Ascending aorta (tissue), 2 donors: ENCODE measurements at regions of chr1 and their contacts with region 1.

Region 1: DNA sequence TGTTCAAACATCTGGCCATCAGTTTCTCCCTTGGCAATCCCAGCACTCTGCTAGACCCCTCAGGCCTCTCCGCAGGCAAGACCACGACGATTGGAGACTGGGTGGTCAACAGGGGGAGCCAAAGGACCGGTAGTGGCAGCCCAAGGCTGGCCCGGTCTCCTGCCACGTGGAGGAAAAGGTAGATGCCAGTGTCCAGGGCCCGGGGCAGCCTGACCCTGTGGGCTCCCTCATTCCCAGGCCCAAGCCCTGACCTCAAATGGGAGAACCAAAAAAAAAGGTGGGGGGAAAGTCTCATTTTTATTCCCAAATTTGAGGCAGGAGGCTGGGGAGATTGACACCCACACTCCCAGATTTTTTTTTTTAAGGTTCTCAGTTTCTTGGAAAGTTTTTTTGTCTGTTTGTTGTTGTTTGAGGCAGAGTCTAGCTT is 24.8 kb downstream of the S100A6 start:
- DNase-seq: peak in 1 of 2 donors; percentile 93
- H3K4me3 ChIP-seq: no peak overlapping the region
- H3K27ac ChIP-seq: no peak overlapping the region
- H3K4me1 ChIP-seq: peaks cover 11 to 24% of the 10 kb centered on the region in 2 donors
- H3K27me3 ChIP-seq: no peaks in the 10 kb centered on the region
- CTCF ChIP-seq: peak; percentile 93 to 95 (median 93)

Region 2: GRCh38 chr1:153494976-153495535 is 15.9 kb before region 1 on chr1:
- intact Hi-C with region 1: loop called (anchors 2 kb)
- DNase-seq: peak in 1 of 2 donors; percentile 90
- H3K4me3 ChIP-seq: no peak overlapping the region
- H3K27ac ChIP-seq: peak overlapping the region; percentile 55 to 58
- H3K4me1 ChIP-seq: peaks cover 17 to 37% of the 10 kb centered on the region in 2 donors
- H3K27me3 ChIP-seq: no peaks in the 10 kb centered on the region
- CTCF ChIP-seq: peak; percentile 90 to 93 (median 92)

Region 3: GRCh38 chr1:153532769-153533599 is 22.0 kb after region 1 on chr1:
- intact Hi-C with region 1: loop called (anchors 2 kb)
- DNase-seq: peak; percentile 65 to 95
- H3K4me3 ChIP-seq: peak overlapping the region; percentile 70 to 95
- H3K27ac ChIP-seq: peak overlapping the region; percentile 98 to 100
- H3K4me1 ChIP-seq: peaks cover 5 to 27% of the 10 kb centered on the region in 2 donors
- H3K27me3 ChIP-seq: no peaks in the 10 kb centered on the region
- CTCF ChIP-seq: peak; percentile 94 to 96 (median 96)

Region 4: GRCh38 chr1:153617675-153618074 is 106.7 kb after region 1 on chr1:
- intact Hi-C with region 1: loop called (anchors 2 kb)
- DNase-seq: peak in 1 of 2 donors; percentile 92
- H3K4me3 ChIP-seq: no peak overlapping the region
- H3K27ac ChIP-seq: peak overlapping the region in 1 of 2 donors; percentile 49
- H3K4me1 ChIP-seq: peaks cover 0 to 12% of the 10 kb centered on the region in 2 donors
- H3K27me3 ChIP-seq: no peaks in the 10 kb centered on the region
- CTCF ChIP-seq: peak; percentile 58 to 73 (median 58)

Region 5: GRCh38 chr1:153626922-153627796 is 116.2 kb after region 1 on chr1 and contains the start of gene S100A13:
- intact Hi-C with region 1: loop called (anchors 5 kb)
- DNase-seq: peak in 1 of 2 donors; percentile 84
- H3K4me3 ChIP-seq: peak within 1 kb of the TSS; percentile 66 to 69
- H3K27ac ChIP-seq: peak within 1 kb of the TSS; percentile 87 to 94
- H3K4me1 ChIP-seq: peaks cover 3 to 34% of the 10 kb centered on the region in 2 donors
- H3K27me3 ChIP-seq: no peaks in the 10 kb centered on the region
- CTCF ChIP-seq: peak; percentile 50 to 72 (median 56)
- total RNA-seq, gene S100A13: 89.7 TPM